Calu3 (cell line): ENCODE measurements at regions of chrX and their contacts with region 1.

Region 1: GRCh38 chrX:47497273-47497672 is 14.3 kb upstream of the ZNF41 start:
- DNase-seq: no peak
- H3K4me3 Mint-ChIP-seq: no peak overlapping the region
- H3K27ac Mint-ChIP-seq: no peak overlapping the region
- H3K4me1 Mint-ChIP-seq: no peaks in the 10 kb centered on the region
- H3K27me3 Mint-ChIP-seq: no peaks in the 10 kb centered on the region
- CTCF ChIP-seq: no peak

Region 2: GRCh38 chrX:46704767-46705386 is 792.4 kb before region 1 on chrX:
- CTCF ChIA-PET with region 1: no interaction called
- intact Hi-C with region 1: no loop called
- DNase-seq: no peak
- H3K4me3 Mint-ChIP-seq: no peak overlapping the region
- H3K27ac Mint-ChIP-seq: no peak overlapping the region
- H3K4me1 Mint-ChIP-seq: peaks cover 19% of the 10 kb centered on the region
- H3K27me3 Mint-ChIP-seq: no peaks in the 10 kb centered on the region
- CTCF ChIP-seq: no peak

Region 3: DNA sequence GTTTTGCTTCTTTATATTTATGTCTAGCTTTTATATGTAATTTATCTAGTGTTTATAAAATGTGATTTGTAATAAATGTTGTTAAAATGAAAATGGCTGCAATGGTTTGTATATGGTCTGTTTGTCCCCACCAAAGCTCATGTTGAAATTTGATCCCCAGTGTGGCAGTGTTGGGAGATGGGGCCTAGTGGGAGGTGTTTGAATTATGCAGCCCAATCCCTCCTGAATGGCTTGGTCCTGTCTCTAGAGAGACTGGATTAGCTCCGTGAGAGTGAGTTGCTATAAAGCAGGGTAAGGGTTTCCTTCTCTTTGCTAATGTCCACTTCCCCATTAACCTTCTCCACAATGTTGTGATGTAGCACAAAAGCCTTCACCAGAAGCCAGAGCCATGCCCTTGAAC is 615.0 kb before region 1 on chrX:
- CTCF ChIA-PET with region 1: no interaction called
- intact Hi-C with region 1: no loop called
- DNase-seq: no peak
- H3K4me3 Mint-ChIP-seq: no peak overlapping the region
- H3K27ac Mint-ChIP-seq: no peak overlapping the region
- H3K4me1 Mint-ChIP-seq: no peaks in the 10 kb centered on the region
- H3K27me3 Mint-ChIP-seq: no peaks in the 10 kb centered on the region
- CTCF ChIP-seq: no peak

Region 4: DNA sequence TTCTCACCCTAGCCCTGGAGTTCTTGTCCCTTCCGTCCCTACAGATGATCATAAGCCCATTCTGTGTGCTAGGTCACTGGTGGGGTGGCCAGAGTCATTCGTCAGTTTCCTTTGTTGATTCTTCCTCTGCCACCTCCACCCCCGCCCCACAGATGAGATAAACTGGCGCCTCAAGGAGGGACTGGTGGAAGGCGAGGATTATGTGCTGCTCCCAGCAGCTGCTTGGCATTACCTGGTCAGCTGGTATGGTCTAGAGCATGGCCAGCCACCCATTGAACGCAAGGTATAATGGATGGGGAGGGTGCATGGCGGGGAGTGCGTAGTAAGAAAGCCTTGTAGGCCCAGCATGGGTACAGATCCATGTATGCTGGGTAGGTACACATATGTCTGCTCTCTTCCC is 258.1 kb before region 1 on chrX:
- CTCF ChIA-PET with region 1: no interaction called
- intact Hi-C with region 1: no loop called
- DNase-seq: no peak
- H3K4me3 Mint-ChIP-seq: no peak overlapping the region
- H3K27ac Mint-ChIP-seq: no peak overlapping the region
- H3K4me1 Mint-ChIP-seq: peaks cover 9% of the 10 kb centered on the region
- H3K27me3 Mint-ChIP-seq: no peaks in the 10 kb centered on the region
- CTCF ChIP-seq: no peak

Region 5: DNA sequence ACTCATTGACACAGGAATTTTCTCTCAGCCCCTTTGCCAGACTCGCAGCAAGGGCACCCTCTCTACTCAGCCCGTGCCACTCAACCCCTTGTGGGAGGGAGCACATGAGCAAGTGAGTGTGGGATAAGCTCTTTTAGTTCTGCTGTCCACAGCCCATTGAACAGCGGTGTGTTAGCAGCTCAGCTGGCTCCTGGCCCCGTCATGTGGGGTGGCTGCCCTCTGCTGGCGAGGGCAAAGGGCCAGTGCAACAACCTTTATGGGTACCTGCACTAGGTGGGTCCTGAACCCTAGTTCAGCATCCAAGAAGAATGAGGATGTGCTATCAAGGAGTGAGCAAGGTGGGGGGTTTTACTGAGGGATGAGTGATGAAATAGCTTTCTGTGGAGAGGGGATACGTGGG is 254.4 kb after region 1 on chrX:
- CTCF ChIA-PET with region 1: interaction called, 8 read pairs
- intact Hi-C with region 1: loop called (anchors 1 kb)
- DNase-seq: peak; percentile 64
- H3K4me3 Mint-ChIP-seq: no peak overlapping the region
- H3K27ac Mint-ChIP-seq: no peak overlapping the region
- H3K4me1 Mint-ChIP-seq: no peaks in the 10 kb centered on the region
- H3K27me3 Mint-ChIP-seq: peaks cover 52% of the 10 kb centered on the region
- CTCF ChIP-seq: peak; percentile 47

Region 6: DNA sequence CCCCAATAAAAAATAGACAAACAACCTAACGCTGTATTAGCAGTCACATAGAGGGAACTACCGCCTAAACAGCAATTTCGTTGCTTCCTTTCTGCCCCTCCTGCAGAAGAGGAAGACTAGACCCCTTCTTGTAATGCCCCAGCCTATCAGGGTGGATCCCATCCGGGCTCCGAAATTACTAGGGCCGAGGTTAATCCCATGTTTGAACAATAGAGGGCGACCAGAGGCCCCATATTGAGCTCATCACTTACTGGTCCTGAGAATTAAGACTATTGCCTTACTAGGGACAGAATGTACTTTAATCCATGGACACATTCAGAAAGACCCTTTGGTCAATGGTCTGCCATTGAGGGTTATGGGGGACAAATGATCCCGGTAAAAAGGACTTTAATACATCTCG is 585.9 kb after region 1 on chrX:
- CTCF ChIA-PET with region 1: no interaction called
- intact Hi-C with region 1: no loop called
- DNase-seq: peak; percentile 52
- H3K4me3 Mint-ChIP-seq: no peak overlapping the region
- H3K27ac Mint-ChIP-seq: no peak overlapping the region
- H3K4me1 Mint-ChIP-seq: peaks cover 19% of the 10 kb centered on the region
- H3K27me3 Mint-ChIP-seq: no peaks in the 10 kb centered on the region
- CTCF ChIP-seq: peak; percentile 33